ENCODE measurements at regions of chr9 and their contacts with region 1.

Region 1: DNA sequence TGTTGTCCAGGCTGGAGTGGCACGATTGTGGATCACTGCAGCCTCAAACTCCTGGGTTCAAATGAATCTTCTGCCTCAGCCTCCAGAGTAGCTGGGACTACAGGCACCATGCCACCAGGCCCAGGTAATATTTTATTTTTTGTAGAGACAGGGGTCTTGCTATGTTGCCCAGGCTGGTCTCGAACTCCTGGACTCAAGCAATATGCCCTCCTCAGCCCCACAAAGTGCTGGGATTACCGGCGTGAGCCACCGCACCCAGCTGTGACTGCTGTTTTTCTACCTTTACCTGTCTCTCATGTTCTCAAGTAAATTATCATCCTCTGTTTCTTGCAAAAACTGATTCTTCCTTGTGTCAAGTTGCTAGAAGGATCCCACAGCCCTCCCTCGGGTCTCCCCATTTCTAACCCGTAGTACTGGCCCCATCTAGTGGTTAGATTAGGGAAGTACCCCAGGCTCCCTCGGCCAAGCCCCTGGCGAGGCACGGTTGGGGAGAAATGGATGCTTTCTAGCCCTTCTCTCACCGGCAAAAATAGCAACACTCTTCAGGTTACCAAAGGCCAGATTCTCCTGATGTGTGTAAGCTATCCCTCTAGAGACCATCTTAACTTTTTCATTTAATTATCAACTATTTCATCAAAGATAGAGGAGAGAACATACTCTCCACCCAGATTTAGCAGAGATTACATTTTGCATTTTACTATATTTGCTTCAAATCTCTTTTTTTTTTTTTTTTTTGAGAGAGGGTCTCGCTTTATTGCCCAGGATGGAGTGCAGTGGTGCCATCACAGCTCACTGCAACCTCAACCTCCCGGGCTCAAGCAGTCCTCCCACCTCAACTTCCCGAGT is 19.2 kb upstream of the TOR1B start:
- DNase-seq: peak; percentile 68
- ATAC-seq: peak; percentile 98
- H3K4me3 ChIP-seq: no peak overlapping the region
- H3K27ac ChIP-seq: no peak overlapping the region
- H3K4me1 ChIP-seq: peaks cover 4 to 7% of the 10 kb centered on the region in 2 experiments; a peak in 3 of 4 replicates
- H3K27me3 ChIP-seq: no peaks in the 10 kb centered on the region
- CTCF ChIP-seq: peak in 2 of 3 experiments; percentile 91 to 95; a peak in 4 of 6 replicates
- POLR2A ChIP-seq: no peak
- RAD21 ChIP-seq: no peak

Region 2: GRCh38 chr9:129131300-129132145 is 652.2 kb before region 1 on chr9:
- CTCF ChIA-PET with region 1: interaction called, 3 read pairs
- POLR2A ChIA-PET with region 1: no interaction called
- RAD21 ChIA-PET with region 1: no interaction called
- intact Hi-C with region 1: loop called (anchors 2 kb)
- DNase-seq: peak; percentile 38
- ATAC-seq: peak; percentile 96
- H3K4me3 ChIP-seq: no peak overlapping the region
- H3K27ac ChIP-seq: peak overlapping the region; percentile 32; the same call in 1 of the 2 replicates
- H3K4me1 ChIP-seq: peaks cover 8 to 20% of the 10 kb centered on the region in 2 experiments
- H3K27me3 ChIP-seq: no peaks in the 10 kb centered on the region
- CTCF ChIP-seq: peak in 2 of 3 experiments; percentile 98 to 99; a peak in 4 of 6 replicates
- POLR2A ChIP-seq: no peak
- RAD21 ChIP-seq: no peak

Region 3: DNA sequence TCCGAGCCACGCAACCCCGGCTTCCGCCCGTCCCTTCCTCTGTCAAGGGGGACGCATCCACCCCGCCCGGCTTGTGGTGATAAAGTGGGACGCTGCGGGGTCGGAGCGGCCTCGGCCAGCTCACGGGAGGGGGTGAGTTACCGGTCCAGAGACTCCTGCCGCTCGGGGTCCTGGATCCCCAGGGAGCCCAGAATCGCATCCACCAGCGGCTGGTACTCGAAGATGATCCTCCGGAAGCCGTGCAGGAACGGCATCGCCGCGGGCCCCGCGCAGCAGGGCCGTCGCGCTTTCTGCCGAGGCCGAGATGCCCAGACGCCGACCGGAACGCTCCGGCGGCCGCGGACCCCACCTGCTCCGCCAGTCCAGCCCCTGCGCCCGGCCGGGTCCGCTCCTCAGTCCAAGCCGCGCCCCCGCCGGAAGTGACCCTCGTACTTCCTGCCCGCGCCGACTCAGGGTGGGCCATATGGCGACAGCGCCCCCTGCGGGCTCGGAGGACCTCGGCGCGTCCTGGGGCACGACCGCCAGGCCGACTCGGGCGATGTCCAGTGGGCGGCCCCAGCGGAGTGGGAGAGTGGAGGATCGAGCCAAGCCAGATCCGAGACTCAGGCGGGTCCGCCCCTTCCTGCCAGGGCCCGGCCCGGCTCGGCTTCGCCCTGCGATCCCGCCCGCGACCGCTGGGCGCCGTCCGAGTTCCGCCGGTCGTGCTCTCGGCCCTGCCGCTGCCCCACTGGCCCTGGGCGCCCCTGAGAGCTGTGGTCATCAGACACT is 141.8 kb before region 1 on chr9 and contains the start of gene ASB6:
- CTCF ChIA-PET with region 1: interaction called, 4 read pairs
- POLR2A ChIA-PET with region 1: no interaction called
- RAD21 ChIA-PET with region 1: interaction called in 1 of 2 experiments, 3 read pairs
- intact Hi-C with region 1: loop called (anchors 1 kb)
- DNase-seq: peak; percentile 92
- ATAC-seq: peak; percentile 98
- H3K4me3 ChIP-seq: peak within 1 kb of the TSS; percentile 85 to 95
- H3K27ac ChIP-seq: peak within 1 kb of the TSS; percentile 74
- H3K4me1 ChIP-seq: peaks cover 10 to 17% of the 10 kb centered on the region in 2 experiments; a peak in 3 of 4 replicates
- H3K27me3 ChIP-seq: no peaks in the 10 kb centered on the region
- CTCF ChIP-seq: peak in 2 of 3 experiments; percentile 88 to 90; a peak in 4 of 6 replicates
- POLR2A ChIP-seq: peak; percentile 26
- RAD21 ChIP-seq: no peak
- total RNA-seq, gene ASB6: 21.6 TPM

Region 4: DNA sequence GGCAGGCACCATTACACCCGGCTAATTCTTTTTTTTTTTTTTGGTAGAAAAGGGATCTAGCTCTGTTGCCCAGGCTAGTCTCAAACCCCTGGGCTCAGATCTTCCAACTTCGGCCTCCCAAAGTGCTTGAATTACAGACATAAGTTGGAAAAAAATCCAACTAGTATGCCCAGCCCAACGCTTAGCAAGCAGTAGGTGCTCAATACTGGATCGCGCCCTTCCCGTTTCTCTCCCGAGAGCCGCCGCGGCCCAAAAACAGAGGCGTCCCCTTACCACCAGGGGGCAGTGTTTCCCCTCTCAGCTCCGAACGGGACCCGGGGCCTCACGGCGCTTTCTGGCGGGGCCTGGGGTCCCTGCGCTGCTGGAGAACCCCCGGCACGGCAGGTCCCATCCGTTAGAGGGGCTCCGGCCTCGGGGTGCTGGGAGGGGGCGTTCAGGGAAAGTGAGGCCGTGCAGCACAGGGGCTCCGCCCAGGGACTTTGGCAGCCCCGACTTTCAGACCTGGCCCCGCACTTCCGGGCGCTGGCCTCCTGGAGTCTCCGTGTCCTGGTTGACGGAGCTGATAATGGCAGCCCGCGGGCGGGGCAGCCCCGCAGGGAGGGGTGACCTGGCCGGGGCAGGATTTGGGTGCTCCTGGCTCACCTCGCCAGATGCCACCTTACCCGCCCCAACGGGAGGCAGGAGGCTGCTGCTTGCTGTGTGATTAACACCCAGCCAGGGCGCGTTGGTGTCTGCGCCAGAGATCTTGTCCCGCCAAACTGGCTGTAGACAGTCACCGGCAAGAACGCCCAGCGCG is 46.1 kb before region 1 on chr9:
- CTCF ChIA-PET with region 1: interaction called, 33 read pairs
- POLR2A ChIA-PET with region 1: interaction called, 4 read pairs
- RAD21 ChIA-PET with region 1: interaction called, 4 to 8 read pairs
- intact Hi-C with region 1: loop called (anchors 1 kb)
- DNase-seq: peak; percentile 51
- ATAC-seq: peak; percentile 90
- H3K4me3 ChIP-seq: peak overlapping the region; percentile 38 to 61
- H3K27ac ChIP-seq: peak overlapping the region; percentile 77
- H3K4me1 ChIP-seq: peaks cover 7 to 17% of the 10 kb centered on the region in 2 experiments; a peak in 3 of 4 replicates
- H3K27me3 ChIP-seq: no peaks in the 10 kb centered on the region
- CTCF ChIP-seq: peak; percentile 86 to 96 (median 92)
- POLR2A ChIP-seq: no peak
- RAD21 ChIP-seq: peak; percentile 98

Region 5: DNA sequence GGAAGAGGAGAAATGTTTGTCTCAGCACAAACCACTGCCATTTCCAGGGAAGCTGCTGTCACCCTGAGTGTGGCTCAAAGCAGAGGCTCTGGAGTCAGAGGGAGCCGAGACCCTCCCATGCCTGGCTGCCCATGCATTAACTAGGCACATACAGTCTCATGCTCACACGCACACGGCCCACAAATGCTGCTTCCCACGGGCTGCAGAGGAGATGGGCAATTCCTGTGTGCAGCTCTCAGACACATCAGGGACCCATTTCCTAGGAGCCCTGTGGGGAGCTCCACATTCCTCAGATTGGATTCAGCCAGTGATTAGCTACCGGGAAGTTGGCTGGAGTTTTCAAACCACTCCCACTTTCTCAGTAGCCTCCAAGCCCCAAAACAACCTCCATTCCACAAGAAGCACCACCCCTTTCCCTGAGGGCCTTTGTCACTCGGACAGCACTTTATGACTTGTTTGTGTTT is 21.8 kb before region 1 on chr9:
- CTCF ChIA-PET with region 1: no interaction called
- POLR2A ChIA-PET with region 1: no interaction called
- RAD21 ChIA-PET with region 1: no interaction called
- intact Hi-C with region 1: no loop called
- DNase-seq: no peak
- ATAC-seq: peak; percentile 82
- H3K4me3 ChIP-seq: peak overlapping the region in 1 of 2 experiments; percentile 38; a peak in 2 of 4 replicates
- H3K27ac ChIP-seq: peak overlapping the region; percentile 63
- H3K4me1 ChIP-seq: peaks cover 30 to 38% of the 10 kb centered on the region in 2 experiments
- H3K27me3 ChIP-seq: no peaks in the 10 kb centered on the region
- CTCF ChIP-seq: no peak
- POLR2A ChIP-seq: no peak
- RAD21 ChIP-seq: no peak